ENCODE measurements at regions of chr15 and their contacts with region 1.

Region 1: DNA sequence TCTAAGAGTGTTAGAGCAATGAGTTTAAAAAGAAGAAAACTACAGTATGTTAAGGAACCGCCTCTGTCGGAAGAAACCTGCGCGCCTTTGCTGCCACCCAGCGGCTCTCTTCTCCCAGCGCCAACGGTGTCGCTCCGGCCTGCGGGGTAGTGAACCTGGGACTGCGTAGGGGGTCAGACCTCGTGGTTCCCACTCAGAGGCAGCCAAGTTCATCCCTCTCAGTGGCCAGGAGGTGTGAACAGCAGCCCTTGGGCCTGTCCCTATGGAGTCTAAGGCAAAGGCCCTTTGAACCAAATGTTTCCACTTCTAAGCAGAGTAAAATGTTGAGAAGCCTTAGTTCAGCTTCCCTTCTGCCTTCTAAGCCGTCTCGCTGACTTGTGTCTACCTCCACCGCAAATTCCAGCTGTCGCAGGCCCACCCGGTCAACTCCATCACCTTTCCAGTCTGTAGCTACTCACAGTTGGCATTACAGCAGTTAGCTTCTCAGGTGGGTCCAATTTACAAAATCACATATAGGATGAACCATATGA is 980 bp upstream of the RAB27A start:
- DNase-seq: peak; percentile 78
- H3K4me3 ChIP-seq: peak overlapping the region; percentile 75
- H3K27ac ChIP-seq: peak overlapping the region; percentile 35
- H3K4me1 ChIP-seq: peaks cover 4% of the 10 kb centered on the region
- H3K27me3 ChIP-seq: no peaks in the 10 kb centered on the region
- CTCF ChIP-seq: peak; percentile 93

Region 2: GRCh38 chr15:55221090-55222011 is 69.2 kb before region 1 on chr15:
- CTCF ChIA-PET with region 1: interaction called, 4 read pairs
- POLR2A ChIA-PET with region 1: no interaction called
- intact Hi-C with region 1: loop called (anchors 1 kb)
- DNase-seq: peak; percentile 11
- H3K4me3 ChIP-seq: no peak overlapping the region
- H3K27ac ChIP-seq: no peak overlapping the region
- H3K4me1 ChIP-seq: no peaks in the 10 kb centered on the region
- H3K27me3 ChIP-seq: no peaks in the 10 kb centered on the region
- CTCF ChIP-seq: no peak

Region 3: GRCh38 chr15:55434989-55435825 is 144.6 kb after region 1 on chr15:
- CTCF ChIA-PET with region 1: interaction called, 5 read pairs
- POLR2A ChIA-PET with region 1: no interaction called
- intact Hi-C with region 1: loop called (anchors 10 kb)
- DNase-seq: peak; percentile 65
- H3K4me3 ChIP-seq: no peak overlapping the region
- H3K27ac ChIP-seq: no peak overlapping the region
- H3K4me1 ChIP-seq: no peaks in the 10 kb centered on the region
- H3K27me3 ChIP-seq: no peaks in the 10 kb centered on the region
- CTCF ChIP-seq: peak; percentile 69

Measured in A673 (cell line).